AG04450 (cell line): ENCODE measurements at regions of chr7 and their contacts with region 1.

Region 1: GRCh38 chr7:129948877-129949291 is 3.9 kb downstream of the UBE2H start:
- DNase-seq: peak; percentile 91
- H3K4me3 ChIP-seq: peak overlapping the region; percentile 90
- H3K27ac ChIP-seq: peak overlapping the region; percentile 97
- H3K27me3 ChIP-seq: no peaks in the 10 kb centered on the region
- CTCF ChIP-seq: no peak

Region 2: GRCh38 chr7:129969807-129970446 is 21.0 kb after region 1 on chr7:
- CTCF ChIA-PET with region 1: no interaction called
- POLR2A ChIA-PET with region 1: interaction called, 12 read pairs
- DNase-seq: peak; percentile 36
- H3K4me3 ChIP-seq: no peak overlapping the region; the same call in 1 of the 2 replicates
- H3K27ac ChIP-seq: peak overlapping the region; percentile 96
- H3K27me3 ChIP-seq: no peaks in the 10 kb centered on the region
- CTCF ChIP-seq: no peak

Region 3: GRCh38 chr7:130961128-130961601 is 1012.3 kb after region 1 on chr7:
- CTCF ChIA-PET with region 1: no interaction called
- POLR2A ChIA-PET with region 1: no interaction called
- DNase-seq: no peak
- H3K4me3 ChIP-seq: peak overlapping the region; percentile 26
- H3K27ac ChIP-seq: peak overlapping the region; percentile 97
- H3K27me3 ChIP-seq: no peaks in the 10 kb centered on the region
- CTCF ChIP-seq: no peak